ENCODE measurements at regions of chr12 and their contacts with region 1.

Region 1: GRCh38 chr12:47715393-47715876 is 9.6 kb upstream of the RPAP3 start:
- DNase-seq: peak; percentile 62 to 92 (median 66)
- ATAC-seq: peak; percentile 83
- H3K4me3 ChIP-seq: no peak overlapping the region
- H3K27ac ChIP-seq: no peak overlapping the region
- H3K4me1 ChIP-seq: peaks cover 3 to 4% of the 10 kb centered on the region in 2 experiments; a peak in 4 of 5 replicates
- H3K27me3 ChIP-seq: no peaks in the 10 kb centered on the region
- CTCF ChIP-seq: peak; percentile 80 to 89 (median 84)
- EP300 ChIP-seq: no peak
- POLR2A ChIP-seq: no peak
- RAD21 ChIP-seq: peak; percentile 85 to 91

Region 2: DNA sequence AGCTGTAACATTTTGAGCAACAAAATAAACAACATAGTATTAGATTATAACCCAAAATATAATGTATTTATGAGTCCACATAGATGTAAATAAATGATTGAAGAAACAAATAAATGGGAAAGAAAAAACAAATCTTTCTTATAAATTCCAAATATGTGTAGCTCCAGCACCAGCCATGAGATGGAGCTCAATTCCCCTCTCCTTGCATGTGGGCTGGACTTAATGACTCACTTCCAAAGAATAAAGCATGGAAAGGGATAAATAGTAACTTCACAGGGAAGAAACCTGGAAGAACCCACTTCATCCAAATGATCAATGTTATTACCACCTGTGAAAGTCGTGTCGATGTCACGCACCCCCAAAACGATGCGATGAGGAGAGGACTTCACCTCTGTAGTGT is 168.3 kb before region 1 on chr12:
- CTCF ChIA-PET with region 1: no interaction called
- POLR2A ChIA-PET with region 1: no interaction called
- in situ Hi-C with region 1: no loop called
- intact Hi-C with region 1: no loop called
- DNase-seq: peak in 3 of 4 experiments; percentile 13 to 19 (median 15)
- ATAC-seq: peak; percentile 65; the same call in 1 of the 3 replicates
- H3K4me3 ChIP-seq: no peak overlapping the region
- H3K27ac ChIP-seq: no peak overlapping the region
- H3K4me1 ChIP-seq: no peaks in the 10 kb centered on the region; a peak in 1 of 5 replicates
- H3K27me3 ChIP-seq: peaks cover 0 to 8% of the 10 kb centered on the region in 2 experiments; a peak in 1 of 5 replicates
- CTCF ChIP-seq: peak; percentile 38 to 61 (median 52); a peak in 4 of 6 replicates
- EP300 ChIP-seq: no peak
- POLR2A ChIP-seq: no peak
- RAD21 ChIP-seq: peak in 1 of 2 experiments; percentile 64; a peak in 2 of 4 replicates

Region 3: GRCh38 chr12:47742253-47742825 is 26.9 kb after region 1 on chr12:
- CTCF ChIA-PET with region 1: no interaction called
- POLR2A ChIA-PET with region 1: interaction called, 4 read pairs
- in situ Hi-C with region 1: no loop called
- intact Hi-C with region 1: loop called (anchors 2 kb)
- DNase-seq: peak; percentile 71 to 76 (median 74)
- ATAC-seq: peak; percentile 57
- H3K4me3 ChIP-seq: no peak overlapping the region
- H3K27ac ChIP-seq: no peak overlapping the region
- H3K4me1 ChIP-seq: peaks cover 27 to 54% of the 10 kb centered on the region in 2 experiments
- H3K27me3 ChIP-seq: peaks cover 7 to 41% of the 10 kb centered on the region in 2 experiments
- CTCF ChIP-seq: peak; percentile 93 to 98 (median 97)
- EP300 ChIP-seq: no peak
- POLR2A ChIP-seq: no peak
- RAD21 ChIP-seq: peak; percentile 91 to 97

Region 4: DNA sequence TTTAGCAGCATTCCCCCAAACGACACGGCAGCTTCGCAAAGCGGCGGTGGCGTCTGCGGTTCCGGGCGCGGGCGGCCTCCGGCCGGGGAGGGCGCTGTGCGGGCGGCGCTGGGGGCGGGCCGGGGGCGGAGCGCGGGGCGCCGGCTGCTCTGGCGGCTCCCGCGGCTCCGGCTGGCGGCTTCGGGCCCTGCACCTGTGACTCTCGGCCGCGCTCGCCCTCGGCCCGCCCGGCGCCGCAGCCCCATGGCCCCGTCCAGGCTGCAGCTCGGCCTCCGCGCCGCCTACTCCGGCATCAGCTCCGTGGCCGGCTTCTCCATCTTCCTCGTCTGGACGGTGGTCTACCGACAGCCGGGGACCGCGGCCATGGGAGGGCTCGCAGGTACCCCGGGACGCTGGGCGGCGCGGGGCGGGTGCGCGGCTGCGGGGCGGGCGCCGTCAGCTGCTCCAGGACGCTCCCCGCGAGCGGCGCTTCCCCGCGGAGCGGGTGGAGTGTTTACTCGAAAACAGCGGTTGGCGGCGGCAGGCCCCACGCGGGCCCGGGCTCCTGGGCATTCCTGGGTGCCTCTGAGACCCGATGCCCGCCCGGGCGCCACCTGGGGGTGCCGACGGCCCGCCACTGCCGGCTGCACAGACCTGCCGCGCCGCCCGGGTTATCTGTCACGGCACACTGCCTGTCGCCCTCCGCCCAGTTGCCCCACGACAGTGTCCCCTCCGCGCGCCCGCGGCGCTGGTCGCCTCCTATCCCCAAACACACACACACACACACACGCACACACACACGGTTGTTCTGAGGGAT is 57.8 kb after region 1 on chr12 and contains the start of gene SLC48A1:
- CTCF ChIA-PET with region 1: interaction called, 10 read pairs
- POLR2A ChIA-PET with region 1: interaction called, 4 read pairs
- in situ Hi-C with region 1: loop called (anchors 10 kb)
- intact Hi-C with region 1: no loop called
- DNase-seq: peak; percentile 84 to 95 (median 94)
- ATAC-seq: peak; percentile 81
- H3K4me3 ChIP-seq: peak within 1 kb of the TSS; percentile 83
- H3K27ac ChIP-seq: peak within 1 kb of the TSS; percentile 92
- H3K4me1 ChIP-seq: peaks cover 53 to 67% of the 10 kb centered on the region in 2 experiments
- H3K27me3 ChIP-seq: no peaks in the 10 kb centered on the region
- CTCF ChIP-seq: peak in 2 of 3 experiments; percentile 52 to 71; a peak in 4 of 6 replicates
- EP300 ChIP-seq: no peak
- POLR2A ChIP-seq: peak; percentile 51; the same call in 1 of the 2 replicates
- RAD21 ChIP-seq: no peak
- polyA plus RNA-seq, gene SLC48A1: 23.5 to 26.9 TPM

Region 5: GRCh38 chr12:47949441-47950308 is 234.2 kb after region 1 on chr12:
- CTCF ChIA-PET with region 1: interaction called, 5 read pairs
- POLR2A ChIA-PET with region 1: no interaction called
- in situ Hi-C with region 1: loop called (anchors 5 kb)
- intact Hi-C with region 1: loop called (anchors 1 kb)
- DNase-seq: peak; percentile 83 to 86 (median 84)
- ATAC-seq: peak; percentile 96
- H3K4me3 ChIP-seq: no peak overlapping the region
- H3K27ac ChIP-seq: no peak overlapping the region
- H3K4me1 ChIP-seq: peaks cover 0 to 11% of the 10 kb centered on the region in 2 experiments; a peak in 3 of 5 replicates
- H3K27me3 ChIP-seq: peaks cover 6 to 49% of the 10 kb centered on the region in 2 experiments; a peak in 3 of 5 replicates
- CTCF ChIP-seq: peak; percentile 88 to 92 (median 92)
- EP300 ChIP-seq: no peak
- POLR2A ChIP-seq: no peak
- RAD21 ChIP-seq: peak; percentile 78 to 87

Region 6: GRCh38 chr12:48175613-48176416 is 460.4 kb after region 1 on chr12:
- CTCF ChIA-PET with region 1: no interaction called
- POLR2A ChIA-PET with region 1: no interaction called
- in situ Hi-C with region 1: loop called (anchors 5 kb)
- intact Hi-C with region 1: no loop called
- DNase-seq: peak in 2 of 4 experiments; percentile 39 to 43
- ATAC-seq: peak; percentile 89
- H3K4me3 ChIP-seq: no peak overlapping the region
- H3K27ac ChIP-seq: peak overlapping the region; percentile 44
- H3K4me1 ChIP-seq: peaks cover 0 to 23% of the 10 kb centered on the region in 2 experiments; a peak in 4 of 5 replicates
- H3K27me3 ChIP-seq: no peaks in the 10 kb centered on the region
- CTCF ChIP-seq: no peak
- EP300 ChIP-seq: peak; percentile 53
- POLR2A ChIP-seq: no peak; the same call in 1 of the 2 replicates
- RAD21 ChIP-seq: no peak

Measured in K562 (cell line).